Naive thymus-derived CD8-positive, alpha-beta T cell (primary cell): ENCODE measurements at regions of chrX and their contacts with region 1.

Region 1: GRCh38 chrX:16882702-16883486 is 12.7 kb upstream of the RBBP7 start:
- DNase-seq: peak; percentile 42 to 84 (median 60)
- ATAC-seq: peak; percentile 81 to 83
- H3K4me3 Mint-ChIP-seq: peak overlapping the region; percentile 72 to 87 (median 83)
- H3K27ac Mint-ChIP-seq: peak overlapping the region; percentile 25 to 92 (median 72)
- H3K4me1 Mint-ChIP-seq: peaks cover 0 to 12% (median 3%) of the 10 kb centered on the region in 4 donors
- H3K27me3 Mint-ChIP-seq: peaks cover 0 to 2% (median 0%) of the 10 kb centered on the region in 5 donors

Region 2: GRCh38 chrX:16870095-16870860 is 12.6 kb before region 1 on chrX and contains the start of gene RBBP7:
- POLR2A ChIA-PET with region 1: interaction called, 37 read pairs
- DNase-seq: peak; percentile 85 to 97 (median 93)
- ATAC-seq: peak; percentile 77 to 80
- H3K4me3 Mint-ChIP-seq: peak within 1 kb of the TSS; percentile 93 to 99 (median 96)
- H3K27ac Mint-ChIP-seq: peak within 1 kb of the TSS; percentile 93 to 98 (median 98)
- H3K4me1 Mint-ChIP-seq: peaks cover 12 to 44% (median 38%) of the 10 kb centered on the region in 4 donors
- H3K27me3 Mint-ChIP-seq: no peaks in the 10 kb centered on the region
- polyA plus RNA-seq, gene RBBP7: 146 to 175 (median 154) TPM